Activated B cell treated with CpG ODN at 0.5 μM for 24 hours (primary cell): ENCODE measurements at regions of chr4 and their contacts with region 1.

Region 1: GRCh38 chr4:158768555-158769174 is at the start of gene FNIP2:
- DNase-seq: peak; percentile 41
- ATAC-seq: peak; percentile 79
- H3K4me3 Mint-ChIP-seq: peak within 1 kb of the TSS; percentile 84
- H3K27ac Mint-ChIP-seq: no peak within 1 kb of the TSS
- H3K4me1 Mint-ChIP-seq: peaks cover 8% of the 10 kb centered on the region
- H3K27me3 Mint-ChIP-seq: peaks cover 72% of the 10 kb centered on the region
- CTCF ChIP-seq: no peak
- total RNA-seq, gene FNIP2: 0.22 TPM in 1 of 2 replicates, not detected in the other

Region 2: GRCh38 chr4:158671915-158672806 is 96.5 kb before region 1 on chr4 and contains the start of gene ETFDH:
- CTCF ChIA-PET with region 1: no interaction called
- POLR2A ChIA-PET with region 1: no interaction called
- intact Hi-C with region 1: loop called (anchors 2 kb)
- DNase-seq: peak; percentile 95
- ATAC-seq: peak; percentile 83
- H3K4me3 Mint-ChIP-seq: peak within 1 kb of the TSS; percentile 98
- H3K27ac Mint-ChIP-seq: peak within 1 kb of the TSS; percentile 96
- H3K4me1 Mint-ChIP-seq: peaks cover 23% of the 10 kb centered on the region
- H3K27me3 Mint-ChIP-seq: no peaks in the 10 kb centered on the region
- CTCF ChIP-seq: no peak
- total RNA-seq, gene ETFDH: 12.0 and 15.4 TPM in 2 replicates

Region 3: GRCh38 chr4:158809611-158810486 is 41.2 kb after region 1 on chr4:
- CTCF ChIA-PET with region 1: no interaction called
- POLR2A ChIA-PET with region 1: no interaction called
- intact Hi-C with region 1: loop called (anchors 2 kb)
- DNase-seq: no peak
- ATAC-seq: peak; percentile 77
- H3K4me3 Mint-ChIP-seq: no peak overlapping the region
- H3K27ac Mint-ChIP-seq: no peak overlapping the region
- H3K4me1 Mint-ChIP-seq: peaks cover 24% of the 10 kb centered on the region
- H3K27me3 Mint-ChIP-seq: peaks cover 77% of the 10 kb centered on the region
- CTCF ChIP-seq: no peak